ENCODE measurements at regions of chr11 and their contacts with region 1.

Region 1: DNA sequence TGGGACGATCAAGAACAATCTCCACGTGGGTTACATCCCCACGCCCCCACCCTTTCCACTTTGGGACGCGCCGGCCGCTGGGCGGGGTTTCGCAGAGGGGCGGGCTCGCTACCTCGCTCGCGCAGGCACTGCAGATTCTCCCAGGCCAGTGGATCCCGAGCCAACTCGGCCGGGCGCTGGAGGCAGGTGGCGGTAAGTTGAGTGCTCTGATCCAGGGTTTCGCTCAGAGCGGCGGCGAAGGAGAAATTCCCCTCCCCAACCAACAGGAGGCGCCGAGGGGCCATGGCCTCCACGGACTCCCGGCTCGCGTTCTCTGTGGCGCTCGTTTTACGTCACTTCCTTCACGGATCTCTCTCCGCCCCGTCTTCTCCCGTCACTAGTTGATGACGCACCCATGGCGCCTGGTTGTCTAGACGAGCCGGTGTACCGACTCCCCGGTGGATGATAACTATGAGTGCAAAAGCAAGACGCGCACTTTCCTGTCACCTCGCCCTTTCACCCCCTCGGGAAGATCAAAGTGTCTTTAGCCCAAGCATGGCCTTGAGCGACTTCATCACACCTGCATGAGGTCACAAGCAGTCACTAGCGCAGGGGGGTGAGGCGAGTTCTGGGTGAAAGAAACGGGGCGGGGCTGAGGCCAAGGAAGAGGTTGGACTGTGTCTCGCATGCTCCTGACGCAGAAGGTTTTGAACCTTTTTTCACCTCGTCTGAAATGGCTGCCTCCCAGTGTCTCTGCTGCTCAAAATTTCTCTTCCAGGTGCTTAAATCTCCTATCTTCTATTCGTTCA is at the starts of genes CFAP68 and FDXACB1:
- DNase-seq: peak; percentile 97
- H3K4me3 ChIP-seq: peak within 1 kb of the TSS; percentile 48 to 58 (median 49)
- H3K27ac ChIP-seq: peak within 1 kb of the TSS; percentile 88 to 96 (median 92)
- H3K4me1 ChIP-seq: peaks cover 6 to 16% (median 9%) of the 10 kb centered on the region in 4 donors
- H3K27me3 ChIP-seq: no peaks in the 10 kb centered on the region
- CTCF ChIP-seq: peak; percentile 94 to 99 (median 98)
- EP300 ChIP-seq: peak; percentile 21
- POLR2A ChIP-seq: peak; percentile 51
- total RNA-seq, gene CFAP68: 0.20 to 19.8 (median 18.8) TPM in 3 of 4 donors, not detected in the other
- total RNA-seq, gene FDXACB1: 1.4 to 3.4 (median 1.5) TPM in 3 of 4 donors, not detected in the other

Region 2: DNA sequence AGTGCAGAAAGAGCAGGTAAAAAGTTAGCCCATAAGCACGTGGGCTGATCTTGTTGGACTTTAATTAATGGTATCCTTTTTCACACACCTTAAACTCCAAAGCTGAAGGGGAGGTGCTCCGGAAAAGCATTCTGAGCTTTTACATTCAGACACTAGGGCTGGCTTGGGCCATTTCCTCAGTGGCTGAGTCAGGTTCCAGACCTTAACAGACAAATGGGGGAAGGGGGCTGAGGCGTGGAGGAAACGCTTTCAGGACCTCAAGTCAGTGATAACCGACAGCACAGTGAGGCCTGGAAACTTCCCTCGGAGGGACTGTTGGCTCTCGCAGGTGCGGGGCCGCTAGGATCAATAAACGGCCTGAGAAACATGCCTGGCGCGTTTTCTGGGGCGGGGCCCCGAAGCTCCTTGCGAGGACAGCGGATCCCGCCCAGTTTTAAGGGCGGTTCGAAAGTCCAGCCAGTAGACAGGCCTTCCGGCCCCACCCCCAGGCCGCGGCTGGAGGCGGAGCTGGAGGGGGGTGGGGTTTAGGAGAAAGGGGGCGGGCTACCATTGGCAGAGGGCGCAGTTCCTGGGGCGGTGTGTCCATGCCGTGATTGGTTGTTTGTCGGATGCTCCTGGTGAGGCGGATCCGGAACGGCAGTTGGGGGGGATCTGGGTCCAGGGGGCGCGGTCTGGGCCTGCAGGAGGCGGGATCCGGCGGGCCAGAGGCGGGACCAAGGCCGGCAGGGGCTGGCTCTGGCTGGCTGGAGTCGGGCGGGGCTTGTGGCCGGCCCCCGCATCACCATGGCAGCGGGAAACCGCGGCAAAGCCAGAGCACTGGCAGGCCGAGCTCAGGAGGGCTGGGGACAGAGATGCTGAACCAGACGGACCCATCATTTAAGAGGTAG is 47.7 kb after region 1 on chr11:
- in situ Hi-C with region 1: loop called in 1 of 4 experiments (anchors 10 kb)
- intact Hi-C with region 1: no loop called
- DNase-seq: peak; percentile 97
- H3K4me3 ChIP-seq: peak overlapping the region; percentile 13 to 47 (median 24)
- H3K27ac ChIP-seq: peak overlapping the region; percentile 87 to 93 (median 90)
- H3K4me1 ChIP-seq: peaks cover 12 to 41% (median 28%) of the 10 kb centered on the region in 4 donors
- H3K27me3 ChIP-seq: no peaks in the 10 kb centered on the region
- CTCF ChIP-seq: peak in 3 of 5 experiments; percentile 8 to 41 (median 37)
- EP300 ChIP-seq: no peak
- POLR2A ChIP-seq: peak; percentile 56

Region 3: GRCh38 chr11:111982019-111982464 is 103.0 kb after region 1 on chr11:
- in situ Hi-C with region 1: loop called in 1 of 4 experiments (anchors 10 kb)
- intact Hi-C with region 1: loop called (anchors 5 kb)
- DNase-seq: peak; percentile 87
- H3K4me3 ChIP-seq: peak overlapping the region in 3 of 4 donors; percentile 23 to 46 (median 23)
- H3K27ac ChIP-seq: peak overlapping the region; percentile 77 to 87 (median 82)
- H3K4me1 ChIP-seq: peaks cover 8 to 62% (median 30%) of the 10 kb centered on the region in 4 donors
- H3K27me3 ChIP-seq: no peaks in the 10 kb centered on the region
- CTCF ChIP-seq: peak; percentile 63 to 87 (median 68)
- EP300 ChIP-seq: no peak
- POLR2A ChIP-seq: peak; percentile 56

Region 4: DNA sequence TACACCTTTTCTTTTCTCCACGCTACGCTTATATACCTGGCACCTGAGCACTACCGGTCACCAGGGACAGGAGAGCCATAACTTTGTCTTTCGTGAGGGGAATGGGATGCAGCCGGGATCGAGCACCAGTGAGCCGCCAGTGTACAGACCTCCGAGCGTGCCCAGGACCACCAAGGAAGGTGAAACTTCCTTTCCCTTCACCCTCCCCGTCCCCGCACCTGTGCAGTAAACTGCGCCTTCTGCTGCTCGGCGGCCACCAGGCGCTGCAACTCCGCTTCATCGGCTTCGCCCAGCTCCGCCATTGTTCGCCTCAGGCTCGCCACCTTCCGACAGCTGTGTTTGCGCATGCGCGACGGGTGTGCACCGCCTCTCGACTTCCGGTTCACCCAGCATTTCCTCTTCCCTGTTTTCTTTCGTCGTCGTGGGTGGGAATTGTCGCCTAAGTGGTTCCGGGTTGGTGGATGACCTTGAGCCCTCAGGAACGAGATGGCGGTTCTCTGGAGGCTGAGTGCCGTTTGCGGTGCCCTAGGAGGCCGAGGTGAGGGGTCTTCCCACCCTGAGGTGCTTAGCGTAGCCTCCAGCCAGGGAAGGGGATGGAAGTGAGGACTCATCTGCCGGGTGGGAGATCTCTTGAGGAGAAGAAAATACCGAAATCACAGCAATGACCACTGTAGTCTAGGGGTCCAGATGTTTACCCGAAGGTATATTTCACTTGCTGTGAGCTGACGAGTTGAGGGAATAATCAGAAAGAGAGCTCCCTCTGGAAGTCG is 207.6 kb after region 1 on chr11 and contains the starts of genes SDHD and TIMM8B:
- in situ Hi-C with region 1: loop called in 1 of 4 experiments (anchors 10 kb)
- intact Hi-C with region 1: no loop called
- DNase-seq: peak; percentile 96
- H3K4me3 ChIP-seq: peak within 1 kb of the TSS; percentile 65 to 83 (median 74)
- H3K27ac ChIP-seq: peak within 1 kb of the TSS; percentile 80 to 84 (median 84)
- H3K4me1 ChIP-seq: peaks cover 22 to 36% (median 24%) of the 10 kb centered on the region in 4 donors
- H3K27me3 ChIP-seq: no peaks in the 10 kb centered on the region
- CTCF ChIP-seq: peak in 4 of 5 experiments; percentile 22 to 68 (median 36)
- EP300 ChIP-seq: no peak
- POLR2A ChIP-seq: peak; percentile 79
- total RNA-seq, gene SDHD: 30.3 to 268 (median 145) TPM
- total RNA-seq, gene TIMM8B: 26.2 to 58.9 (median 40.6) TPM

Region 5: GRCh38 chr11:112134473-112134872 is 255.4 kb after region 1 on chr11:
- in situ Hi-C with region 1: no loop called
- intact Hi-C with region 1: no loop called
- DNase-seq: peak; percentile 16
- H3K4me3 ChIP-seq: no peak overlapping the region
- H3K27ac ChIP-seq: peak overlapping the region; percentile 83 to 86 (median 84)
- H3K4me1 ChIP-seq: peaks cover 11 to 44% (median 28%) of the 10 kb centered on the region in 4 donors
- H3K27me3 ChIP-seq: no peaks in the 10 kb centered on the region
- CTCF ChIP-seq: peak in 1 of 5 experiments; percentile 9
- EP300 ChIP-seq: no peak
- POLR2A ChIP-seq: no peak

Measured in transverse colon (tissue), 4 donors.